ENCODE measurements at regions of chr1 and their contacts with region 1.

Region 1: DNA sequence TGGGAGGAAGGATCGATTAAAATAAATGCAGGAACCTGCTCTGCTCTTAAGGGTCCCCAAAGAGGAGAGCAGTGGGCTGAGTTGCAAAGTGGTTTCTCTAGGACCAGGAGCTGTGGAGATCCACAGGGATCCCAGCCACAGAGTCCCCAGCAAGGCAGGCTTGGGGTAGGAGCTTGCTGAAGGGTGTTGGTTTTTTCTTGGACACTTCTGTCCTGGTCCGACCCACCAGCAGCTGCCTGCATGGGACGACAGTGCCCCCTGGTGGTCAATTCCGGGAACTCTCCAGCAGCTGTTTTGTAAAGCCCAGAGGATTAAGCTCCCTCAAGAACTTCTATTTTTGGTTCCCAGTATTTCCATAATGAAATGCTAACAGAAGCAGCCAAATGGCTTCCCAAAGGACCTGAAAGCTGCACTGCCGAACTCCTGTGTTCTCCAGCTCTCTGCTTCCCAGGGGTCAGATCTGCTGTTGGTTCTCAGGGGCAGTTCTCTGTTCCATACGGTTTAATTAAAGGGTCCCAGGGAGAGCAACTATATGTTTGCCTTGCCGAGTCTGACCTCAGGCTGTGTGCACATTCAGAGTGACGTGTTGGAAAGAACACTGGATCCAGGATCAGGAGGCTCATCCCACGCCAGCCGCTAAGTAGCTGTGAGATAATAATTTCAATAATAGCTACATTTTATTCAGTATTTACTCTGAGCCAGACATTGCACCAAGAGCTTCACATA is 23.2 kb downstream of the NENF start:
- DNase-seq: peak; percentile 71 to 98
- H3K4me3 ChIP-seq: no peak overlapping the region
- H3K27ac ChIP-seq: no peak overlapping the region
- H3K4me1 ChIP-seq: peaks cover 0 to 4% (median under 1%) of the 10 kb centered on the region in 4 experiments; a peak in 2 of 7 replicates
- H3K27me3 ChIP-seq: no peaks in the 10 kb centered on the region
- CTCF ChIP-seq: peak; percentile 86 to 92 (median 90)
- EP300 ChIP-seq: no peak
- POLR2A ChIP-seq: no peak
- RAD21 ChIP-seq: peak; percentile 98

Region 2: DNA sequence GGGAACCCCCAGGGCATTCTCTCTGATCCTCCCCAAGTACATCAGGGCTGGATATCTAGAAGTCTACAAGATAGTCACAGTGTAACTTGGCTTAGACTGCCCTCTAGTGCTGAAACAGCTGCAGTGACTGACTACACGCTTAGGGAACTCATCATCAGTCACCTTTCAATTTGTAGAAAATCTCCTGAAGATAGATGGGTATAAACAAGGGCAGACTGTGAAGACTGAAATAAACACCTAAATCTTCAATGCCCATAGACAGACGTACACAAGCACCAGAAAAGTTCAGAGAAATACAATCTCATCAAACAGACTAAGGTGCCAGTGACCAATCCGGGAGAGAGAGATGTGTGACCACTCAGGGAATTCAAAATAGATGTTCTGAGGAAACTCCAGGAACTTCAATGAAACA is 87.9 kb before region 1 on chr1:
- CTCF ChIA-PET with region 1: interaction called, 95 read pairs
- POLR2A ChIA-PET with region 1: no interaction called
- DNase-seq: peak; percentile 21 to 58
- H3K4me3 ChIP-seq: no peak overlapping the region
- H3K27ac ChIP-seq: no peak overlapping the region
- H3K4me1 ChIP-seq: no peaks in the 10 kb centered on the region
- H3K27me3 ChIP-seq: no peaks in the 10 kb centered on the region
- CTCF ChIP-seq: peak in 2 of 3 experiments; percentile 68 to 91; a peak in 3 of 4 replicates
- EP300 ChIP-seq: no peak
- POLR2A ChIP-seq: no peak
- RAD21 ChIP-seq: peak; percentile 89 to 92

Region 3: DNA sequence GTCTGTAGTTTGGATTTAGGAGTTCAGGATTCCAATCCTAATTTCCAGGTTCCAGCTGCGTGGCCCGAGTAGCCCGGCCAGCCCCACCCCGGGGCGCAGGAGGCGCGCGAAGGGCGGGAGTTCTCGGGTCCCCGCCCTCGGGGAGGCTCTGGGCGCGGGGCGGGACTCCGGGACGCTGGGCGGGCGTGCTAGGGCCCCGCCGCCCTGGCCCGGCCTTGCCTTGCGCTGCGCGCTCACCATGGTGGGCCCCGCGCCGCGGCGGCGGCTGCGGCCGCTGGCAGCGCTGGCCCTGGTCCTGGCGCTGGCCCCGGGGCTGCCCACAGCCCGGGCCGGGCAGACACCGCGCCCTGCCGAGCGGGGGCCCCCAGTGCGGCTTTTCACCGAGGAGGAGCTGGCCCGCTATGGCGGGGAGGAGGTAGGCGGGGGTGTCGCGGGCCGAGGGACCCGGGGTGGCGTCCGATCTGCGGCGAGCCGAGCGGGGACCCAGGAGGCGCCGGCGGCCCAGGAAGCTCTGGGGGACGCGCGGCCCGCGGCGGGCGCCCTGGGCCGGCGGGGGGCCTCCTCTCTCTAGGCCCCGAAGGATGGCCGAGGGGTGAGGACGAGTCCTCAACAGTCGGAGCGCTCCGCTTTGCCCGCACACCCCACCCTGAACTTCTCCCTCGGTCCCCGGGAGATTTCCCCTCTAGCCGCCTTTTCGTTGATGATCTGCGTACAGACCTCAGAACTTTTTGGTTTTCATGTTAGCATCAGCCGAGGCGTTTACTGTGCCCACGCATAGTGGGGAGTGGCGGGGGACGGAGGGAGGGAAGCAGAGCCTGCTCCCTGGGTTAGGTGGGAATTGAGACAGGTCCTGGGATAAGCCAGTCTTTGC is 23.0 kb before region 1 on chr1 and contains the start of gene NENF:
- CTCF ChIA-PET with region 1: interaction called, 71 read pairs
- POLR2A ChIA-PET with region 1: no interaction called
- DNase-seq: peak in 1 of 2 experiments; percentile 79
- H3K4me3 ChIP-seq: peak within 1 kb of the TSS; percentile 51 to 75 (median 55)
- H3K27ac ChIP-seq: no peak within 1 kb of the TSS
- H3K4me1 ChIP-seq: peaks cover 3 to 5% (median 3%) of the 10 kb centered on the region in 4 experiments; a peak in 3 of 7 replicates
- H3K27me3 ChIP-seq: no peaks in the 10 kb centered on the region; a peak in 2 of 7 replicates
- CTCF ChIP-seq: no peak
- EP300 ChIP-seq: no peak
- POLR2A ChIP-seq: no peak
- RAD21 ChIP-seq: no peak
- total RNA-seq, gene NENF: 27.0 and 28.5 TPM in 2 replicates

Region 4: GRCh38 chr1:212608209-212608955 is 152.4 kb after region 1 on chr1 and contains the start of gene ATF3:
- CTCF ChIA-PET with region 1: interaction called, 21 read pairs
- POLR2A ChIA-PET with region 1: interaction called, 10 read pairs
- DNase-seq: peak; percentile 96 to 99
- H3K4me3 ChIP-seq: peak within 1 kb of the TSS; percentile 51 to 96 (median 74)
- H3K27ac ChIP-seq: peak within 1 kb of the TSS; percentile 71; the same call in 1 of the 2 replicates
- H3K4me1 ChIP-seq: peaks cover 14 to 41% (median 26%) of the 10 kb centered on the region in 4 experiments
- H3K27me3 ChIP-seq: peaks cover 10 to 38% (median 27%) of the 10 kb centered on the region in 4 experiments; a peak in 6 of 7 replicates
- CTCF ChIP-seq: no peak
- EP300 ChIP-seq: no peak
- POLR2A ChIP-seq: peak; percentile 99
- RAD21 ChIP-seq: peak in 1 of 2 experiments; percentile 13; a peak in 1 of 4 replicates
- total RNA-seq, gene ATF3: 21.5 and 27.7 TPM in 2 replicates

Region 5: GRCh38 chr1:212671342-212672031 is 215.5 kb after region 1 on chr1:
- CTCF ChIA-PET with region 1: interaction called, 57 read pairs
- POLR2A ChIA-PET with region 1: no interaction called
- DNase-seq: peak in 1 of 2 experiments; percentile 45
- H3K4me3 ChIP-seq: no peak overlapping the region
- H3K27ac ChIP-seq: no peak overlapping the region
- H3K4me1 ChIP-seq: peaks cover 0 to 8% (median 6%) of the 10 kb centered on the region in 4 experiments; a peak in 3 of 7 replicates
- H3K27me3 ChIP-seq: peaks cover 0 to 1% (median 0%) of the 10 kb centered on the region in 4 experiments; a peak in 3 of 7 replicates
- CTCF ChIP-seq: no peak
- EP300 ChIP-seq: no peak
- POLR2A ChIP-seq: no peak
- RAD21 ChIP-seq: no peak

Region 6: DNA sequence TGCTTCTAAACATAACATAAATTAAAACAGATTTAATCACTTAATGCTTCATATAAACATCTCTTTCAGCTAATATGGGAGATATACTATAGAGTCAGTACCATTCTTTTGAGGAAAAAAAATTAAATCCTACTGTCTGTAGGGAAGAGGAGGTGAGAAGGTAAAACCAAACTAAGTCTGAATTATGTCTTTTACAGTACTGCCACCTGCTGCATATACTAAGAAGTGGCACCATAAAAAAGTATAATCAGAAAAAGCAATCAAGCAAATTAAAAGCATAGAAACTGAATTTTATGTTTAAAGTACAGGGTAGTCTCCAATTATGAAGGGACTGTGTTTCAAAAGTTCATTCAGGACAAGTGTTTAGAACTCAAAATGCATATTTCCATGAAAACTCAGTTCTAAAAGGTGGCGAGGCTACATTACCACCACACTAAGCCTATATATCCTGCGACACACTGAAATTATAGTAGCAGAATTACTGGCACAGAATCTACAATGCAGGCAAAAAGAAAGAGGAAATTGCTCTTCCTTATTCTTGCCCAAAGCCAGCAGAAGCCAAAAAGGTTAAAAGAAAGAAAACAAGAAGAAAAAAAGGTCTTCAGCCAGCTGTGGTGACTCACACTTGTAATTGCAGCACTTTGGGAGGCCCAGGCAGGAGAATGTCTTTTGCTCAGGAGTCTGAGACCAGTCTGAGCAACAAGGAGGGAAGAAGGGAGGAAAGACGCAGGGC is 326.6 kb after region 1 on chr1:
- CTCF ChIA-PET with region 1: interaction called, 19 read pairs
- POLR2A ChIA-PET with region 1: no interaction called
- DNase-seq: no peak
- H3K4me3 ChIP-seq: no peak overlapping the region
- H3K27ac ChIP-seq: no peak overlapping the region
- H3K4me1 ChIP-seq: no peaks in the 10 kb centered on the region
- H3K27me3 ChIP-seq: no peaks in the 10 kb centered on the region
- CTCF ChIP-seq: peak in 2 of 3 experiments; percentile 23 to 54; a peak in 2 of 4 replicates
- EP300 ChIP-seq: no peak
- POLR2A ChIP-seq: no peak
- RAD21 ChIP-seq: peak; percentile 59 to 65

Measured in H1 (cell line).